ENCODE measurements at regions of chr14 and their contacts with region 1.

Region 1: DNA sequence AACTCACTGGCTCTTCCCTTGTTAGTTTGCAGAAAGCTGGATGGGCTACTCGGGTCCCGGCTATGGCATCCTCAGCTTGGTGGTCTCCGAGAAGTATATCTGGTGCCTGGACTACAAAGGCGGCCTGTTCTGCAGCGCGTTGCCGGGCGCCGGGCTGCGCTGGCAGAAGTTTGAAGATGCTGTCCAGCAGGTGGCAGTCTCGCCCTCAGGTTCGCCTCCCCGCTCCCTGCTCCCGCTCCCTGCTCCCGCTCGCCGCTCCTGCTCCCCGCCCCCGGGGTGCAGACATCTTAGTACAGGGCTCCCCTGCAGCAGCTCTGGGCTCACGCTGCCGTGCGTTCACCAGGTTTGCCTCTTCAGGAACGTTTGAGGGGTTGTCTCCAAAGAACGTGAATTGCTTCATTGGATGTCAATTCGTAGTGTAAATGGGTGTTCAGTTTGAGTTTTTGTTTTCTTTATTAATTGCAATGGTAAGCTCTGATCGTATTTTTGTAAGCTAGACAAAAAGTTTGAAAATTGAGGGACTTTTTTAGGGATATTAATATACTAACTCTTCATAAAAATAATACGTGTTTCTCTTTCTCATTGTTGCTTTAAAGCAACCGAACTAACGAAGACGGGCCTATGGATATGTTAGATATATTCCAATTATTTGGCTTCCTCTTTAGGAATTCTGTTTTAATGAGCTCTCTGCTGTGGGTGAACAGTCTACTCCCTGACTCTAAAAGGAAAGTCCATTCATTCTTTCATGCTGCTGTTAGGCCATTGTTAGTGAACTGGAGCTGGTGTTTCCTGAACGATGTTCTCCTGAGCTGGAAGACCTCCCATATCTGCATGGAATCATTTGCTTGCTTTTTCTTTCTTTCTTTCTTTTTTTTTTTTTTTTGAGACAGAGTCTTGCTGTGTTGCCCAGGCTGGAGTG is 71.3 kb downstream of the ANKRD9 start:
- DNase-seq: peak; percentile 84 to 91
- ATAC-seq: peak; percentile 95 to 98
- H3K4me3 ChIP-seq: no peak overlapping the region
- H3K27ac ChIP-seq: 0 out of 6 replicates have a peak overlapping the region, but pooled peaks of 1 of the 2 experiments have one; percentile 50
- H3K4me1 ChIP-seq: no peaks in the 10 kb centered on the region
- CTCF ChIP-seq: peak; percentile 78
- EP300 ChIP-seq: no peak
- POLR2A ChIP-seq: no peak
- RAD21 ChIP-seq: peak; percentile 84 to 85

Region 2: GRCh38 chr14:102408724-102409123 is 29.5 kb before region 1 on chr14:
- CTCF ChIA-PET with region 1: interaction called, 12 read pairs
- POLR2A ChIA-PET with region 1: no interaction called
- DNase-seq: no peak
- ATAC-seq: no peak
- H3K4me3 ChIP-seq: no peak overlapping the region
- H3K27ac ChIP-seq: no peak overlapping the region
- H3K4me1 ChIP-seq: no peaks in the 10 kb centered on the region
- CTCF ChIP-seq: no peak
- EP300 ChIP-seq: no peak
- POLR2A ChIP-seq: no peak
- RAD21 ChIP-seq: no peak

Region 3: DNA sequence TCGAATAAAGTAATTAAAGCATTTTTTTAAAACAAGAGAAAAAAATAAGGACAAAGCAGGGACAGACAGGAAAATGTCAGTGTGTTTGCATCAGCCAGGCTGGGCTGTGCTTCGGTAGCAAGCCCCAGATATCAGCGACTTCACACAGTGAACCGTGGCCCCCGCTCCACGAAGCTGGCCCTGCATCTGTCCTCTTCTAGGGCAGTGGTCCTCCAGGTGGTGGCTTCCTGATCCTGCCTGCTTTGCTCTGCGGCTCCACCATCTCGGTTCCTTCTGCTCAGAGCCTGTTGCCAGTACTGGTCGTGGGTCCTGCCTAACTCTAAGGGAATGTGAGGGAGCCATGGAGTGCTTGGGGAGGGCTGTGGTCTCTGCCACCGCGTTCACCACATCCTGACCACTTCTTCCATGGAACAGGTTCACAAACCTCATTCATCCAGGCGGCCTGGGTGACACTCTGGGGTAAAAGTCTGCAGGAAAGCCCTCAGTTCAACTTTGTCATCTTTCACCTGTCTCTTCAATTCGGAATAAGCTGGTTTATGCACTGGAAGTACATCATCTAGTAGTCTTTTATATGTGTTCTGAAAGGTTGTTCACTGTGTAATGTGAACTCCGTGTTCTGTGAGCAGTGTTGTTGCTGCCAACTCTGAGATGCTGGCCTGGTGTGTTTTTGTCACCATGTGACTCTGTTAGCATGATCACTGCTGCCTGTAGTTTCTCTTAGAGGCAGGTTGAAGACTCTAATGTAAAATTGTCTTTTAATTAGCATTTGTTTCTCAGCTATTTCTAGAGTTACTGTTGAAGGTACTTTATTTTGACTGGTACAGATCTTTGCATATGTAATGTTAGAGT is 23.5 kb after region 1 on chr14:
- CTCF ChIA-PET with region 1: interaction called, 108 read pairs
- POLR2A ChIA-PET with region 1: no interaction called
- DNase-seq: no peak
- ATAC-seq: no peak
- H3K4me3 ChIP-seq: no peak overlapping the region
- H3K27ac ChIP-seq: no peak overlapping the region
- H3K4me1 ChIP-seq: no peaks in the 10 kb centered on the region
- CTCF ChIP-seq: no peak
- EP300 ChIP-seq: no peak
- POLR2A ChIP-seq: no peak
- RAD21 ChIP-seq: no peak

Region 4: GRCh38 chr14:102493096-102493495 is 54.8 kb after region 1 on chr14:
- CTCF ChIA-PET with region 1: interaction called, 52 read pairs
- POLR2A ChIA-PET with region 1: no interaction called
- DNase-seq: no peak
- ATAC-seq: no peak
- H3K4me3 ChIP-seq: no peak overlapping the region
- H3K27ac ChIP-seq: no peak overlapping the region
- H3K4me1 ChIP-seq: no peaks in the 10 kb centered on the region
- CTCF ChIP-seq: no peak
- EP300 ChIP-seq: no peak
- POLR2A ChIP-seq: no peak
- RAD21 ChIP-seq: no peak

Region 5: GRCh38 chr14:102508774-102509743 is 70.8 kb after region 1 on chr14:
- CTCF ChIA-PET with region 1: interaction called, 154 read pairs
- POLR2A ChIA-PET with region 1: no interaction called
- DNase-seq: peak in 1 of 2 experiments; percentile 40
- ATAC-seq: peak; percentile 12 to 30
- H3K4me3 ChIP-seq: peak overlapping the region; percentile 89
- H3K27ac ChIP-seq: peak overlapping the region; percentile 84 to 94
- H3K4me1 ChIP-seq: peaks cover 23% of the 10 kb centered on the region
- CTCF ChIP-seq: no peak
- EP300 ChIP-seq: no peak
- POLR2A ChIP-seq: no peak
- RAD21 ChIP-seq: no peak

Region 6: DNA sequence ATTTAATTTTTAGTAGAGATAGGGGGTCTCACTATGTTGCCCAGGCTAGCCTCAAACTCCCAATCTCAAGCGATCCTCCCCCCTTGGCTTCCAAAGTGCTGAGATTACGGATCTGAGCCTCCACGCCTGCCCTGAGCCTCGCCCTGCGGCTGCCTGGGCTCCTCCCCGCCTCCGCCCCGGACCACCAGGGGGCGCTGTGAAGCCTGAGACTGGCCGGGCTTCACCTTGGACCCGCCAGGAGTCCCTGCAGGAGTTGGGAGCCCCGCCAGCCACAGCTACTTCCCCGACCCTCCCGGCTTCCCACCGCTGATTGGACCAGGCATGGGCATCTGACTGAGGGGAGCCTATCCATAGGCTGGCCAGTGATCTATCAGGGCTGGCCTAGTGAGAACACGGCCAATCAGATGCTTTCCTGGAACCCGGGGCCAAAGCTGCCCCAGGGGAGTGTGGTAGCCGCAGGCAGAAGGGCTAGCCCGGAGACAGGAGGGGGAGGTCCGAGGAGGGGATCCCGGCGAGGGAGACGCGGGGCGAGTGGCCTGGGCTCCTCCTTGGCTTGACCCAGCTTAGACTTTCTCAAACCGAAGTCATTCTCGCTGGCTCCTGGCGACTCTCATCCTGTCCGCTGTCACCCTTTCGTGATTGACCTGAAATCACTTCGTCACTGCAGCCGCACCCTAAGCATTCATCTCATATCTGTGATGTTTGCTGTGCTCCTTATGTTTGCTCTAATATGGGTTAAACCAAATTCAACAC is 86.4 kb after region 1 on chr14:
- CTCF ChIA-PET with region 1: interaction called, 154 read pairs
- POLR2A ChIA-PET with region 1: no interaction called
- DNase-seq: peak; percentile 99
- ATAC-seq: peak; percentile 94 to 97
- H3K4me3 ChIP-seq: peak overlapping the region; percentile 51
- H3K27ac ChIP-seq: peak overlapping the region; percentile 85 to 88
- H3K4me1 ChIP-seq: peaks cover 32% of the 10 kb centered on the region
- CTCF ChIP-seq: peak; percentile 96
- EP300 ChIP-seq: no peak
- POLR2A ChIP-seq: peak; percentile 94
- RAD21 ChIP-seq: peak; percentile 85 to 89

Region 7: GRCh38 chr14:102683399-102684297 is 245.4 kb after region 1 on chr14:
- CTCF ChIA-PET with region 1: no interaction called
- POLR2A ChIA-PET with region 1: no interaction called
- DNase-seq: no peak
- ATAC-seq: peak; percentile 47 to 84; a peak in 3 of 6 replicates
- H3K4me3 ChIP-seq: no peak overlapping the region
- H3K27ac ChIP-seq: peak overlapping the region; percentile 30 to 72; a peak in 5 of 6 replicates
- H3K4me1 ChIP-seq: peaks cover 18% of the 10 kb centered on the region
- CTCF ChIP-seq: no peak
- EP300 ChIP-seq: no peak
- POLR2A ChIP-seq: no peak
- RAD21 ChIP-seq: no peak

Measured in A549 (cell line).